ENCODE measurements at regions of chr16 and their contacts with region 1.

Region 1: GRCh38 chr16:27284865-27285675 is 16.5 kb upstream of the NSMCE1 start:
- DNase-seq: no peak
- CTCF ChIP-seq: no peak

Region 2: DNA sequence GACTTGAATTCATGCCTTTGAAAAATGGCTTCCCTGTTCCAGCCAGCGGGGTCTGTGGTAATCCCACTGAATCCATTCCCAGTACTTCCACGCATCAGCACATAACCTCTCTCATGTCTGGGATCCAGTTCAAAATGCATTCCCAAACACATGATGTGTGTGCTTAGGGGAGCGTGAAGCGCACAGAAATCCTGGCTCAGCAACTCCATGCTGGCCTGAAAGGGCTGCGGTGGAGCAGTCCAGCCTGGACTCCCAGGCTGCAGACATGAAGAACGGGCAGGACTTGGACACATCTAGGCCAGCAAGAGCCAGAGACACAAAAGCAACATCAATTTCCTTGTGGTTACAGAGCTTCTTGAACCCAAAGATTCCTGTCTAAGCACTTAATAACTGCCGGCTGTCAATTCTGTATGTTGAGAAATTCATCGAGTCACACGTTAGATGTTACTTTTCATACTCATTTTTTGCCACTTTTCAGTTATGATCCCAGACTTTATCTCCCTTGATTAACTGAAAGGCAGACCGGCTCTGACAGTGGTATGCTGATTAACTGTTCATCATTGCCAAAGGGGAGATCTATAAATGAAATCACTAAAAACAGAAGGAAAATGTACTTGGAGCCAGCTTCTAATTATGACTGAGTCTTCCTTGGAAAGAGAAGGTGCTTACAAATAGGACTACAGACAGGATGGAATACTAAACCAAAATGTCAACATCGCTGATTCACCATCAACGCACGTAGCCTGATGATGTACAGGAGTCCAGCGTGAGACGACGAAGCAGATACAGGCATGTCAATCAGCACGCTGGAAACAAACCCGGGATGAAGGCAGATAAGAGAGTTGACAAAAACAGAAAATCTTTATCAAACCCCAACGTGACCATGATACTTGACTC is 39.5 kb before region 1 on chr16:
- in situ Hi-C with region 1: loop called (anchors 5 kb)
- DNase-seq: no peak
- CTCF ChIP-seq: no peak

Region 3: DNA sequence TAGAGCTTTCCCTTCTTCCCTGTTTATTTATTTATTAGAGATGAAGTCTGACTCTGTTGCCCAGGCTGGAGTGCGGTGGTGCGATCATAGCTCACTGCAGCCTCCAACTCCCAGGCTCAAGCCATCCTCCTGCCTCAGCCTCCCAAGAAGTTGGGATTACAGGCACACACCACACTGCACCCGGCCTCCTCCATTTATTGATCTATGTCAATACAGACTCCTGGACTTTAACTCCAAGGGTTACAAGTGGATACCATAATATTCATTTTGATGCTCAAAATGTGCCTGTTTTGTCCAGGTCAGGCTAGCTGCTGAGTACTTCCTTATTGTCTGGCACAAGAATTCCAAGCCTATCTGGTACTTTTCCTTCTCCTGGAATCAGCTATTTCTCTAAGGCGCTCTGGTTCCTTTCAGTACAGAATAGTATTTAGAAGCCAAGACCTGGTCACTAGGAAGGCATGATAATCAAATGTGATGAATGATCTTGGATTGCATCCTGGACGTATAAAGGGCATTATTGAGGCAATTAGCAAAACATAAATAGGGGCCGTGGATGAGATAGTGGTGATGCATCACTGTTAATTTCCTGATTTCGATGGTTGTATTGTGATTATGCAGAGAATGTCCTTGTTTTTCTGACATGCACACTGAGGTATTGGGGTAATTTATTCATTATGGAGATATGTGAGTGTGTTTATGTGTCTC is 50.4 kb after region 1 on chr16:
- in situ Hi-C with region 1: no loop called
- DNase-seq: no peak
- CTCF ChIP-seq: no peak

Region 4: DNA sequence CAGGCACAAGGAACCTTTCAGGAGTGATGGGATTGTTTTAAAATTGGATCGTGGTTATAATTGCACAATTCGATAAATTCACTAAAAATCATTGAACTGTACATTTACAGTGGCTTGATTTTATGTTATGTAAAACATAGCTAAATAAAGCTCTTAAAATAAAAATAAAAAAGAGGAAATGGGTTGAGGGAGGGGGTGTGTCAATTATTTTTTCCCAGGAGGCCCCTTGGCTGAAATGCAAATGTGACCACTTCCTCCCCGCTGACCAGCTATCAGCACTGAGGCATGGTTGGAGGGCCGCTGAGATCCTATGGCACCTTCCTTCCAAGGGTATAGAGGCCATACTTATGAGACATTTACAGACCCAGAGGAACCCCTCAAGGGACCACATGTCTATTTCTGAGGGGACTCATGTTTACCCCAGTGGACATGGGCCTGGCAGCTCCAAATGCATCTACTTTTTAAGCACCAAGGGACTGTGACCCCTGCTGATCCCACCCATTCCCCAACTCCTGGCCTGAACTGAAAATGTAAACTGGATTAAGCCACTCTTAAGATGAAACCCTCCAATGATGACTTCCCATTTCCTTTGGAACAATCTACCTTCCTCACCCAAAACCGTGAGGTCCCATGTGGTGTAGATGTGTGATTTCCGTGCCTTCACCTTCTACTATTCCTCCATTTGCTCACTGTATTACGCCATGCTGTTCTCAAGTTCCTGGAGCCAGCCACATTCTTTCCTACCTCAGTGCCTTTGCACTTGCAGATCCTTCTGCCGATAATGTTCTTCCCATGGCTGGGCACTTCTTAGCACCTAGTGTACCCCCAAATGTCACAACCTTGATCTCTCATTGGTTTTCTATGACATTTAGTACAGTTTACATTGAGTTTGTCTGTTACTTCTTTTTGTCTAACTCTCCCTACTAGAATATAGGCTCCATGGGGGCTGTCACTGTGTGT is 114.1 kb after region 1 on chr16:
- in situ Hi-C with region 1: no loop called
- DNase-seq: no peak
- CTCF ChIP-seq: no peak